ENCODE measurements at regions of chr6 and their contacts with region 1.

Region 1: GRCh38 chr6:44234101-44235025 is 11.0 kb downstream of the SLC29A1 start:
- DNase-seq: no peak
- H3K4me3 ChIP-seq: no peak overlapping the region
- H3K27ac ChIP-seq: peak overlapping the region; percentile 99
- H3K4me1 ChIP-seq: peaks cover 40% of the 10 kb centered on the region
- H3K27me3 ChIP-seq: no peaks in the 10 kb centered on the region
- CTCF ChIP-seq: peak; percentile 21 to 57 (median 57)
- POLR2A ChIP-seq: no peak

Region 2: DNA sequence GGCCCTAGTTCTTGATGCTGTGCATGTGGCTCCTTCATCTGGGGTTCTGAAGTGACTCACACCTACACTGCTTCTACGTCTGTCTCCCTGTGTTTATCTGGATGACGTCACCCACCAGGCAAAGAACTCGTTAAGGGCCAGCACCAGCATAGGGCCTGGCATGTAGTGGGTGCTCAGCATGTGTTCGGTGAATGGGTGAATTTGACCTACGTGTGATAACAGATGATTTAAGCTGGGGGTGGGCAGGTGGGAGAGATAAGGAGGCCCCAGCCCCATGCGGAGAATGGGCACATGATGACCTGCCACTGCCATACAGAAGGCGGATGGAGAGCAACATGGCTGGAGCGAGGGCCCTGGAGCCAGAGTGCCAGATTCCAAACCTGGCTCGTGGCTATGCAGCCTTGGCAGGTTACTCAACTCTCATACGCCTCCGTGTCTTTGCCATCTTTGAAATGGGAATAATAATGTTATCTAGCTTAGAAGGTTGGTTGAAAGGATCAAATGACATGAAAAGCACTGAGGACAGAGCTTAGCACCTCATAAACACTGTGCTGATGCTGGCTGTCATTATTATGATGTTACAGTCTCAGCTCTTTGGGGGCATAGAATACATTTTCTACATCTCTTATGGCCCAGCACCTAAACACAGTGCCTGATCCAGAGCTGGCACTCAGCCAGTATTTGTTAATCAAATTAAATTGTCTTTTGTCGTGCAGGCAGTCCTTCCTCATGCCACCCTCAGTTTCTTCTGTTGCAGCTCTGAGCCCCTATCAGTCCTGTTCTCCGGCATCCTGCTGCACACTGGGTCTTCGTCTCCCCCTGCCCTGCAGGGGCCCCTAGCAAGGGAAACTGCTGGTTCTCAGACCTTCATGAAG is 424.7 kb before region 1 on chr6:
- intact Hi-C with region 1: no loop called
- DNase-seq: no peak
- H3K4me3 ChIP-seq: no peak overlapping the region
- H3K27ac ChIP-seq: no peak overlapping the region
- H3K4me1 ChIP-seq: no peaks in the 10 kb centered on the region
- H3K27me3 ChIP-seq: no peaks in the 10 kb centered on the region
- CTCF ChIP-seq: no peak
- POLR2A ChIP-seq: no peak

Region 3: DNA sequence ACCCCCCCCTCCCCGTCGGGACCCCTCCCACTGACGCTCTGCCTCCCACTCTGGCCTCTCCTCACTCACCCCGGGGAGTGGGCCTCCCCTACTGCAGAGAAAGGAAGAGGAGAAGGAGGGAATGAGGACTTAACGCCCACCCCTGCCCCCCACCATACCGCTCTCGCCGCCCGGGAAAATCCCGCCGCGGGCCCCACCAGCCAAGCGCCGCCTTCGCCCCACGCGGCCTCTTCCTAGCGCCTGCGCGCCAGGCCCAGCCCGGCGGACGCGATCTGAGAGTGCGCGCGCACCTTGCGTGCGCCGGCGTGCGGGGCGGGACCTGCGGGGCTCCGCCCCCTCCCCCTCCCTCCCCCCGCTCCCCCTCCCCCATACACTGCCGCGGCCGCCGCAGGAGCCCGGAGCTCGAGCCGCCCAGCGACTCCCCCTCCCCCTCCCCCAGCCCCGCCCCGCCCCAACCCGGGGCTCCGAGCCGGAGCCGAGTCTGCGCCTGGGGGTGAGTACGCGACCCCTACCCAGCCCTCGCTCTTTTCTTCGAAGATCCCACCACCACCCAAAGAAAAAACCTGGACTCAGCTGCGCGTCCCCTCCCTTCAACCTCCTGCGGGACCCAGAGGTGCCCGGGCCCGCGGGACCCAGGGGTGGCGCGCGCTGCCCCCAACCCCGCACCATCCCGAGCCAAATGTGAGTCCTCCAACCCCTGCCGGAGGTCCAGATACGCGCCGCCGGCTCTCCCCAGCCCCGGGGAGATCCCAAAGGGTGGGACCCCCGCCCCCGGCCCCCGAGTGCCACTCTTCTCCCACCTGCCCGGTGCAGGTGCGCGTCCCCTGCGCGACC is 107.0 kb before region 1 on chr6 and contains the starts of genes MRPL14 and TMEM63B:
- intact Hi-C with region 1: no loop called
- DNase-seq: no peak
- H3K4me3 ChIP-seq: peak within 1 kb of the TSS; percentile 78 to 98
- H3K27ac ChIP-seq: peak within 1 kb of the TSS; percentile 88
- H3K4me1 ChIP-seq: peaks cover 73% of the 10 kb centered on the region
- H3K27me3 ChIP-seq: no peaks in the 10 kb centered on the region
- CTCF ChIP-seq: no peak
- POLR2A ChIP-seq: peak in 1 of 2 donors; percentile 86
- total RNA-seq, gene MRPL14: 36.1 TPM
- total RNA-seq, gene TMEM63B: 32.4 TPM

Region 4: DNA sequence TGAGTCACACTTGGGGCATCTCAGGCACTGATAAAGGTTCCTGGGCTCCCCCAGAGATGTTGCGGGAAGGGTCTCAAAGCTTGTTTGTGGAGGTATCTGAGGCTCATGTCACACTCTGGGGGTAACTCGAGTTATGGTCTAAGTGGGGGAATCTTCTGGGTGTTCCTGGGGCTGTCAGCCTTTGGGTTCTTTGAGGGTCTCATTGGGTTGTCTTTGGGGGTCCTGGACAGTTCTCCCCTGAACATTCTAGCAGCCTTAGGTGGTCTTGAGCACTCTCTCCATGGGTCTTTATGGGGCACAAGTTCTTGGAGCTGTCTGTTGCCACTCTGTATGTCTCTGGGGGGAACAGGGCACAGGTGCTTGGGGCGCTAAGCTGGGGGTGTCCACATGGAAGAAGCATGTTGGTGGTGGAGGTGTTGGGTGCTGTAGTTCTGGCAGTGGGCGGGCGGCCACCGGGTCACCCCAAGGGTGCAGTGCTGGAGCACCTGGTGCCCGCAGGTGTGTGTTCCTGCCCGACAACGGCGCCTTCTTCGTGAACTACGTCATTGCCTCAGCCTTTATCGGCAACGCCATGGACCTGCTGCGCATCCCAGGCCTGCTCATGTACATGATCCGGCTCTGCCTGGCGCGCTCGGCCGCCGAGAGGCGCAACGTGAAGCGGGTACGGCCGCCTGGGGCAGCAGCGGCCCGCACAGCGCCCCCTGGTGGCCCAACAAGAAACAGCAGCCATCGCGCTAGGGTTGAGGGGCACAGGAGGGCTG is 82.8 kb before region 1 on chr6:
- intact Hi-C with region 1: no loop called
- DNase-seq: no peak
- H3K4me3 ChIP-seq: no peak overlapping the region
- H3K27ac ChIP-seq: no peak overlapping the region
- H3K4me1 ChIP-seq: peaks cover 7% of the 10 kb centered on the region
- H3K27me3 ChIP-seq: no peaks in the 10 kb centered on the region
- CTCF ChIP-seq: peak; percentile 98 to 99 (median 99)
- POLR2A ChIP-seq: no peak

Region 5: DNA sequence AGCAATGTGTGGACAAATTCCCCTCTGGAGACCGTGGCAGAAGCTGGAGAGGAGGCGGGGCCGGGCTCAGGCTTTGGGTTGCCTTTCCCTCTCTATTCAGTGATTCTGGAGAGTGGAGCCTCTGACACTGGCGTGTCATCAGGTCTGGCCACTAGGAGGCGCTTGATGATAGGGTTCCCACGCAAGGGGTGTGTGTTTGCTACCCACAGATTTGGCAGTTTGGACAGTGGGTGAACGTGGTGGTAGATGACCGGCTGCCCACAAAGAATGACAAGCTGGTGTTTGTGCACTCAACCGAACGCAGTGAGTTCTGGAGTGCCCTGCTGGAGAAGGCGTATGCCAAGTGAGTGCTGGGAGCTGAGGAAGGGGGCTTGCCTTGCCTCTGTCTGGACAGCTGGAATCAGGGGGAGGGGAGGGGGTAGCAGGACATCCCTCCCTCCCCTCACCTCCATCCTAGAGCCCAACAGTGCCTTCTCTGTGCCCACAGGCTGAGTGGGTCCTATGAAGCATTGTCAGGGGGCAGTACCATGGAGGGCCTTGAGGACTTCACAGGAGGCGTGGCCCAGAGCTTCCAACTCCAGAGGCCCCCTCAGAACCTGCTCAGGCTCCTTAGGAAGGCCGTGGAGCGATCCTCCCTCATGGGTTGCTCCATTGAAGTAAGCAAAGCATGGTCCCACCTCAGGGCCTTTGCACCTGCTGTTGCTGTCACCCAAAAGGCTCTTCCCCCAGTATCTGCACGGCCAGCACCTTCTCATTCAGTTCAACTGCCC is 61.4 kb before region 1 on chr6:
- intact Hi-C with region 1: loop called (anchors 5 kb)
- DNase-seq: no peak
- H3K4me3 ChIP-seq: no peak overlapping the region
- H3K27ac ChIP-seq: no peak overlapping the region
- H3K4me1 ChIP-seq: no peaks in the 10 kb centered on the region
- H3K27me3 ChIP-seq: no peaks in the 10 kb centered on the region
- CTCF ChIP-seq: peak; percentile 82 to 90 (median 86)
- POLR2A ChIP-seq: no peak

Measured in vagina (tissue), 2 donors.